ENCODE measurements at regions of chr6 and their contacts with region 1.

Region 1: GRCh38 chr6:56708810-56709597 is 66.3 kb upstream of the DST start:
- DNase-seq: peak; percentile 85
- ATAC-seq: peak; percentile 67
- H3K4me3 ChIP-seq: peak overlapping the region; percentile 50
- H3K27ac ChIP-seq: peak overlapping the region; percentile 74
- H3K4me1 ChIP-seq: peaks cover 39% of the 10 kb centered on the region
- H3K27me3 ChIP-seq: no peaks in the 10 kb centered on the region
- CTCF ChIP-seq: peak; percentile 79

Region 2: GRCh38 chr6:56757588-56757984 is 48.6 kb after region 1 on chr6:
- CTCF ChIA-PET with region 1: interaction called, 6 read pairs
- POLR2A ChIA-PET with region 1: interaction called, 5 read pairs
- intact Hi-C with region 1: loop called (anchors 1 kb)
- DNase-seq: peak; percentile 72
- ATAC-seq: peak; percentile 78
- H3K4me3 ChIP-seq: no peak overlapping the region
- H3K27ac ChIP-seq: no peak overlapping the region
- H3K4me1 ChIP-seq: peaks cover 32% of the 10 kb centered on the region
- H3K27me3 ChIP-seq: no peaks in the 10 kb centered on the region
- CTCF ChIP-seq: peak; percentile 80

Region 3: GRCh38 chr6:56851541-56852259 is 142.7 kb after region 1 on chr6:
- CTCF ChIA-PET with region 1: interaction called, 4 read pairs
- POLR2A ChIA-PET with region 1: no interaction called
- intact Hi-C with region 1: loop called (anchors 2 kb)
- DNase-seq: peak; percentile 77
- ATAC-seq: peak; percentile 94
- H3K4me3 ChIP-seq: peak overlapping the region; percentile 46; the same call in 1 of the 2 replicates
- H3K27ac ChIP-seq: peak overlapping the region; percentile 9
- H3K4me1 ChIP-seq: peaks cover 16% of the 10 kb centered on the region
- H3K27me3 ChIP-seq: no peaks in the 10 kb centered on the region
- CTCF ChIP-seq: peak; percentile 85